ENCODE measurements at regions of chr6 and their contacts with region 1.

Region 1: DNA sequence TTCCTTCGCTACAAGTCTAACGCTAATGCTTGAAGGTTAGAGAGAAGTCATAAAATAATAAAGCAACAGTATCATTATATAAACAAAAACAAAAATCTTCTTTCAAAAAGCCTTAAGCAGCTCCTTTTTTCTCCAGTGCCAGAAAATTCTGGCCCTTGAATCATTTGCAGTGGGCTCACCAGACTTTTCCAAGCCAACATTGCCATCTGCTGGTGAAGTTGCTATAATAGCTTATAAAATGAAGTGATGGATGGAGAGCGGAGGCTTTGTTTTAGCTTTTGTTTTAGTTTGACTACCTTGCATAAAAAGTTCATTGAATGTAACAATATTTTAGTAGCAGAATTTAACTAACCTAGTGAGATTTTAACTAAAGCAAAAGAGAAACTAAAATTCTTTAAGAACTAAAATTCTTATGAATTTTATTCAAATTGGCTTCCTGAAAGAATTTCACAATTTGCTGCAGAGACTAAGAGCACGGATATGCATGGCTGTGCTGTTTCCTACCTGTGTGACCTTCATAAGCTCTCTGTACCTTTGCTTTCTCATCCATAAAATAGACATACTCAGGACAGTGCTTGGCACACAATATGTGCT is 44.8 kb upstream of the SLC2A12 start:
- DNase-seq: peak; percentile 67
- CTCF ChIP-seq: peak; percentile 61

Region 2: DNA sequence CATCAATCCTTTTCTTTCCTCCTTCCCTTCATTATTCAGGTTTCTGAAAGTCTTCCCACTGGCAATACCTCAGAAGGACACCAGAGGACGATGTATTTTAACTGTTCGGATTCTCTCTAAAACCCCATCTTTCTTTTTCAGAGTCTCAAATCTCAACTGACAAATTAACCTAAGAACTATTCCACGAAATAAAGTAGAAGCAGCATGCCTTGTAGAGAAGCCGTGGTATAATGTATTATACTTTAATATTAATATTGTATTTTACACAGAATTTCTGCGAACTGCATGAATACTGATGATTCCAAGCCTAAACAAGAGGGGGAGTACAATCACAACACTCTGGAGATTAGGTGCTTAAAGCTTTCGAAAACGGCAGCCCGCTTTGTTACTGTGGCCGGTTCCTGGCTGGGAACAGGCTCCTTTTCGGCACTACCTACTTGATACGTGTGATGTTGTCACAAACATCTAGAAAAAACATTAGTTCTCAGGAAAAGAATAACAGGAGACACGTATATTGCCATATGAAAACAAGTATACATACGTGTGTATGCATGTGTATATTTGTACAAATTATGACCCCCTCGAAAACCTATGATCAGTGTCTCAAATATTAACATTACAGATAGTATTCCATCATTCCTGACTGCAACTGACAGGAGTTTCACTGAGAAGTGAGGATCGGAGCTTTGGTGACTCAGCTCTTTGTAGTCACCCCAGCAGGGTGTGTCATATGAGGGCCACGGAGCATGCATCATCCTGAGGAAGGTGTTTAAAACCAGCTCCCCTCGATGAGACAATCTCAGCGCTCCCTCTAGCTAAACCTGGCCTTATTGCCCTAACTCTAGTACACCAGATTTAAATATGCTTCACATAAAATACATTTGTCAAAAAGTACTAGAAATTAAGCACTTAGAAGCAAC is 528.0 kb before region 1 on chr6:
- in situ Hi-C with region 1: loop called (anchors 25 kb)
- DNase-seq: peak; percentile 38
- CTCF ChIP-seq: no peak

Region 3: DNA sequence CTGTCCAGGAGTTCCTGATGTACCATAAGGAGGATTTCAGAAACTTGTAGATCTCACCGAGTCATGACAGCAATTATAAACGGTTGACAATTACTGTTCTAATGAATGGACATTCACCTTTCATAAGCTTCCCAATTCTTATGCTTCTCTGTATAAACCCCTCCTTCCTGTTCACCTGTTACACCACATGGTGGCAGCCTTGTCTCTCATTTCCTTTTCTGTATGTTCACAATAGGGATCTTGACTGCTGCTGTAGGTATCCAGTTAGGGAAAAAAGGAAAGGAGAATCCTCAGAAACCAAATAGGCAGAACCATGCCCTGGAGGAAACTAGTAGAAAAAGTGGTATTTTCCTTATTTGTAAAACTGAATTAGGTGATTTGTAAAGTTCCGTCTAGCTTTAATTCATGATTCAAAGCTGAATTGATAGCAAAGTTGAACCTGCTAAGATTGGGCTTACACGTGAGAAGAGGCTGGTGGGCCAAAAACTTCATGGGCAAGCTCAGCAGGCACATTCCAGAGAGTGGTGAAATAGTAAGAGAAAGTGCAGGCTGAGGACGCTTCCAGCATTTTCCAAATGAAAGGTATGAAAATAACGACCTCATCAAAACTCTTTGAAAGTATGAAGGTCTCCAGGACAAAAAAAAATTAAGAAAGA is 173.1 kb before region 1 on chr6:
- in situ Hi-C with region 1: loop called (anchors 5 kb)
- DNase-seq: peak; percentile 62
- CTCF ChIP-seq: peak; percentile 78

Region 4: DNA sequence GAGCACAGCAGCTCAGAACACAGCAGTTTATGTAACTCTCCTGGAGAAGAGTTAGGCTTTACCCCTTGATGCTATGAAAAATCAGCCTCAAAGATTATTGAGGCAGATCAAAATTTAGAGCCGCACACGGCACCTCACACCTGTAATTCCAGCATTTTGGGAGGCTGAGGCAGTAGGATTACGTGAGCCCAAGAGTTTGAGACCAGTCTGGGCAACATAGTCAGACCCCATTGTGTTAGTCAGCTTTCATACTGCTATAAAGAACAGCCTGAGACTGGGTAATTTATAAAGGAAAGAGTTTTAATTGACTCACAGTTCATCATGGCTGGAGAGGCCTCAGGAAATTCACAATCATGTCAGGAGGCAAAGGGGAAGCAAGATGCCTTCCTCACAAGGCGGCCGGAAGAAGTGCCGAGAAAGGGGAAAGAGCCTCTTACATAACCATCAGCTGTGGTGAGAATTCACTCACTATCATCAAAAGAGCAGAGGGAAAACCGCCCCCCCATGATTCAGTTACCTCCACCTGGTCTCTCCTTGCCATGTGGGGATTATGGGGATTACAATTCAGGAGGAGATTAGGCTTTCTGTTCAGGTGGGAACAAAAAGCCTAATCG is 133.0 kb after region 1 on chr6:
- in situ Hi-C with region 1: no loop called
- DNase-seq: no peak
- CTCF ChIP-seq: no peak

Region 5: GRCh38 chr6:134609716-134610261 is 512.6 kb after region 1 on chr6:
- in situ Hi-C with region 1: no loop called
- DNase-seq: no peak
- CTCF ChIP-seq: no peak